Activated CD8-positive, alpha-beta memory T cell treated with anti-CD3 and anti-CD28 coated beads, Interleukin-2, amount 10 ng/mL, durations not matched to agents 7 days and 5 days (primary cell): ENCODE measurements at regions of chr1 and their contacts with region 1.

Region 1: DNA sequence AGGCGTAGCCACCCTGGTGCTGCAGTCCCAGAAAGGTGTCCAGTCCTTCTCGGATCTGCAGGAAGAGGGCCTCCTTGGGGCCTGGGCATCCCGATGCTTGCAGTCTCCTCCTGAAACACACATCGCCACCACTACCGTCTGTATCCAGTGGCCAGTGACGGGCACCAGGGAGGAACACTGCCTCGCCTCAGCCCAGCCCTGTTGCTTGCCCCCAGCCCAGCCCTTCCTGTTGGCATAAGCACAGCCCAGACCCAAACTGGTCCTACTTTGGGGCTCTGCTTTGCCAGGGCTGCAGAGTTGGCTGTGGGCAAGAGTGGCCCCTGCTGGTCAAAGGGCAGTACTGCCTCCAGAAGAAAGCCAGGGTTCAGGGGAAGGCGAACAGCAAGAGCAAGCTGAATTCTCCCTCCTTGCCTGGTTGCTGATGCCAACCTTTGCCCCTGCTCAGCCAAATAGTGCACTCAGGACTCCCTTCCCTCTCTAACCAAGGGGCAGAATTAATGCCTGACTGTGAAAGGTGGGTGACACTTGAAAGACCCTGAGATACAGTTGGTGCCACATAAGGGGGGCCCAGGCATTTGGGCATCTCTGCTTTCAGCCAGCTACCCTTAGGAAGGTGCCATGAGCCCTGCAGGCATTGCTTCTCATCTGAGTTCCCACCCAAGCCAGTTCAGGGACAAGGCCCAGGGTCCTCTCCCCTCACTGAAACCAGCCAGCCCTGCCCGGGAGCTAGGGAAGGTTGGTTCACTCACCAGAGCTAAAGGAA is 11.1 kb upstream of the ARHGEF2 start:
- DNase-seq: peak; percentile 87
- ATAC-seq: peak; percentile 94
- H3K4me3 Mint-ChIP-seq: no peak overlapping the region
- H3K27ac Mint-ChIP-seq: peak overlapping the region; percentile 66
- H3K4me1 Mint-ChIP-seq: peaks cover 26% of the 10 kb centered on the region
- H3K27me3 Mint-ChIP-seq: no peaks in the 10 kb centered on the region

Region 2: DNA sequence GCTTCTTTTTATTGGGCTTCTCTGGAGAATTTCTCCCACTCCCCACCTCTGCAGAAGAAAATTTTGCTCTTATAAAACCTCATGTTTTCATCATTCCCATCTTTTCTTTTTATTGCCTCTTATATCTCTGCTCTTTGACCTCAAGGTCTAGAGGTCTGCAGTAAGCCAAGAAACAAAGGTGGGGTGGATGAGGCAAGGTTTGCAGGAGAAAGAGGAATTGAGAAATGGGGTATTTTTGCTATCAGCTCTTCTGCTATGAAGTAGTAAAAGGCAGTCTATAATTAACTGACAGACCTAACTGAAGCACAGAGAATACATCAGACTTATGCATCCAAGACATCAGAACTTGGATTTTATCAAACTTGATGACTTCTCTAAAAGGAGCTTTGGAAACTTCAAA is 107.2 kb before region 1 on chr1:
- CTCF ChIA-PET with region 1: no interaction called
- DNase-seq: no peak
- ATAC-seq: no peak
- H3K4me3 Mint-ChIP-seq: no peak overlapping the region
- H3K27ac Mint-ChIP-seq: no peak overlapping the region
- H3K4me1 Mint-ChIP-seq: no peaks in the 10 kb centered on the region
- H3K27me3 Mint-ChIP-seq: no peaks in the 10 kb centered on the region

Region 3: GRCh38 chr1:155946633-155947219 is 42.7 kb before region 1 on chr1:
- CTCF ChIA-PET with region 1: interaction called, 35 read pairs
- DNase-seq: no peak
- ATAC-seq: peak; percentile 17
- H3K4me3 Mint-ChIP-seq: peak overlapping the region; percentile 31
- H3K27ac Mint-ChIP-seq: peak overlapping the region; percentile 82
- H3K4me1 Mint-ChIP-seq: peaks cover 46% of the 10 kb centered on the region
- H3K27me3 Mint-ChIP-seq: no peaks in the 10 kb centered on the region

Region 4: DNA sequence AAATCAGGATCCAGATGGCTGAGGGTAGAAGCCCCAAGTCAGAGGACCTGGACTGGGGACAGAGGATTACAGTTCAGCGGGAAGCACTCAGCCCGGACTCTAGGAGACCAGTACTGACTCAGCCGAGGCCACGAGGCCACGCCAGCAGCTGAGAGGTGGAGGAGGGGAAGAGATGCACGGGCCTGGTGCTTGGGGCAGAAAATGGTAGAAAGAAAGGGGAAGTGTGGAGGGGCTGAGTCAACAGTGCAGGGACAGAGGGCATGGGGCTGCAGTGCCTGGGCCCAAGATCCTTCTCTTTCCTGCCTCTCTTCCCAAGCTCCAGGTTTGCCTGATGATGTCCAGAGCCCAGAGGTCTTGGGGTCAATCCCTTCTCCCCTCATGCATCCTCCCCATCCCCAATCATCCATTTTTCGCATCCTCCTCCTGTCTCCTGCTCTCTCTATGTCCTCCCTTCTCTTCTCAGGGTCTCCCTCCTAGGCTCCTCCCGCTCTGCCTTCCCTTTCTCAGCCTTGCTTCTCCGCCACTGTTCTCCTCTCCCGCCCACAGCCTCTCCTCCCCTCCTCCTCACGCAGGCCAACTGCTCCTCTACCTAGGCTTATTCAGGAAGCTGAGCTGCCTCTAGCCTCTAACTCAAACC is 18.8 kb before region 1 on chr1:
- CTCF ChIA-PET with region 1: interaction called, 17 read pairs
- DNase-seq: peak; percentile 58
- ATAC-seq: peak; percentile 48
- H3K4me3 Mint-ChIP-seq: peak overlapping the region; percentile 3
- H3K27ac Mint-ChIP-seq: peak overlapping the region; percentile 86
- H3K4me1 Mint-ChIP-seq: peaks cover 84% of the 10 kb centered on the region
- H3K27me3 Mint-ChIP-seq: no peaks in the 10 kb centered on the region

Region 5: GRCh38 chr1:155978325-155978972 is 11.0 kb before region 1 on chr1 and contains the start of gene ARHGEF2:
- CTCF ChIA-PET with region 1: interaction called, 32 read pairs
- DNase-seq: peak; percentile 91
- ATAC-seq: peak; percentile 80
- H3K4me3 Mint-ChIP-seq: peak within 1 kb of the TSS; percentile 98
- H3K27ac Mint-ChIP-seq: peak within 1 kb of the TSS; percentile 92
- H3K4me1 Mint-ChIP-seq: peaks cover 62% of the 10 kb centered on the region
- H3K27me3 Mint-ChIP-seq: no peaks in the 10 kb centered on the region
- total RNA-seq, gene ARHGEF2: 159 to 161 TPM

Region 6: DNA sequence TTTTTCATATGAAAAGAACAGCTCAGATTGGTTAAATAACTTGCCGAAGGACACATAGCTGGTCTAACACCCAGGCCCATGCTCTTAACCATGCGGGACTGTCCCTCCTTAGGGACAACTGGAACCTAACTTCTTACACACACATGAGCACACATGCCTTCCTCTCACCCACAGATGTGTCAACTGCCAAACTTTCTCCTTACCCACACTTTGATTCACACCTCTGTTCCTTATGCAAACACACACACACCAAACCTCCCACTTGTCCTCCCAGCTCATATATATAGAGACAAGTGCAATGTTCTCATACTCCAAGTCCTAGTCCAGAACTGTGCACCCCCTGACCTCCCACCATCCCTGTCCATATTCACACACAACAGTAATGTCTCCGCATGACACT is 75.8 kb after region 1 on chr1:
- CTCF ChIA-PET with region 1: interaction called, 22 read pairs
- DNase-seq: no peak
- ATAC-seq: no peak
- H3K4me3 Mint-ChIP-seq: no peak overlapping the region
- H3K27ac Mint-ChIP-seq: peak overlapping the region; percentile 2
- H3K4me1 Mint-ChIP-seq: peaks cover 18% of the 10 kb centered on the region
- H3K27me3 Mint-ChIP-seq: no peaks in the 10 kb centered on the region